ENCODE measurements at regions of chr3 and their contacts with region 1.

Region 1: GRCh38 chr3:25427942-25428788 is at the start of gene RARB:
- DNase-seq: peak; percentile 71 to 87 (median 86)
- ATAC-seq: peak; percentile 93 to 94
- H3K4me3 ChIP-seq: peak within 1 kb of the TSS; percentile 91
- H3K27ac ChIP-seq: peak within 1 kb of the TSS; percentile 100
- H3K4me1 ChIP-seq: no peaks in the 10 kb centered on the region
- H3K27me3 ChIP-seq: no peaks in the 10 kb centered on the region
- total RNA-seq, gene RARB: 17.0 to 26.4 (median 24.7) TPM

Region 2: GRCh38 chr3:25033407-25034029 is 394.6 kb before region 1 on chr3:
- intact Hi-C with region 1: loop called in 1 of 4 experiments (anchors 10 kb)
- DNase-seq: peak; percentile 46 to 71 (median 69)
- ATAC-seq: peak; percentile 70 to 78
- H3K4me3 ChIP-seq: no peak overlapping the region
- H3K27ac ChIP-seq: no peak overlapping the region
- H3K4me1 ChIP-seq: no peaks in the 10 kb centered on the region
- H3K27me3 ChIP-seq: no peaks in the 10 kb centered on the region

Measured in right cardiac atrium (tissue), 5 donors.